RWPE1 (cell line): ENCODE measurements at regions of chr12 and their contacts with region 1.

Region 1: DNA sequence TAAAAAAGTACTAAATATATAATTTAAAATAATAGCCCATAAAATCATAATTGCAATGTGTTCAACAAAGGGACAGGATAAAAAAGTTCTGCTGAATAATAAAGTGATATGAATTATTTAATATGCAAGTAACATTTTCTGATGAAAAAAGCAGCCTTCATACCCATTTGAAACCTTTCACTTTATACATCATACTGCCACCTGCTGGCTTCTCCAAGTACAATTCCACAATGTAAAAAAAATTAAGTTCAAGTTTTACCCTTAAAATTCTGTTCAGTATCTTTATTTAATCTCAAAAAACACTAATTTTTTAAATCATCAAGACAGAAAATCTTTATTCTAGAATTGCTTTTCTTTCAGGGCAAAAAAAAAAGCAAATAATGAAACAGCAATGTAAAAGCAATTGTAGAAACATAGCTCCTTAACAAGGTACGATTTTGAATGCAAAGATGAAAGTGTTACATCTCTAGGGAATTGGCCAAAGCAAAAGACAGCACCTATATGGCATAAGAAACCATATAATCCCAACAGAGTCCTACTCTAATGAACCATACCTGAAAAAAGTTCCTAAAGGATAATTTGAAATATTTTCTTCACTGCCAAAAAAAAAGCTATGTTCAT is 15.0 kb downstream of the MDM1 start:
- DNase-seq: peak; percentile 16
- H3K27ac ChIP-seq: no peak overlapping the region
- CTCF ChIP-seq: peak; percentile 70

Region 2: DNA sequence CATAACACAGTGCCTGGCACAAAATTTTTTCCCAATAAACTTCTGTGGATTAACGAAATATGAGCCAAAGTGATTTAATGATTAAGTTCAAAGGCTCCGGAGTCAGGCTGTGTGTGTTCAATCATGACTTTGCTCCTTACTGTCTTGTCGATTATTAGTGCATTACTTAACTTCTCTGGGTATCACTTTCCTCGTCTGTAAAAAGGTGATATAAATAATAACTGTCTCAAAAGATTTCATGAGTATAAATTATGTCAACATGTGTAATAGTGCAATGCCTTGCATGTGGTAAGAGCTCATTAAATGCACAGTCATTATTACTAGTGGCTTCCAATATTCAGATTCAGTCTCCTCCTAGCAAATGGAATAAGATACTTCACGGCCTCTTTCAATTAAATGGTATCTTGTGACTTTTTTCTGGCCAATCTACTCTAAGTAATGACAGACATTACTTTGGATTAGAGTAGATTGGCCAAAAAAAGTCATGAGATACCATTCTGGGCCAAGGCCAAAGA is 150.8 kb before region 1 on chr12:
- CTCF ChIA-PET with region 1: no interaction called
- POLR2A ChIA-PET with region 1: no interaction called
- DNase-seq: no peak
- H3K27ac ChIP-seq: no peak overlapping the region
- CTCF ChIP-seq: no peak

Region 3: DNA sequence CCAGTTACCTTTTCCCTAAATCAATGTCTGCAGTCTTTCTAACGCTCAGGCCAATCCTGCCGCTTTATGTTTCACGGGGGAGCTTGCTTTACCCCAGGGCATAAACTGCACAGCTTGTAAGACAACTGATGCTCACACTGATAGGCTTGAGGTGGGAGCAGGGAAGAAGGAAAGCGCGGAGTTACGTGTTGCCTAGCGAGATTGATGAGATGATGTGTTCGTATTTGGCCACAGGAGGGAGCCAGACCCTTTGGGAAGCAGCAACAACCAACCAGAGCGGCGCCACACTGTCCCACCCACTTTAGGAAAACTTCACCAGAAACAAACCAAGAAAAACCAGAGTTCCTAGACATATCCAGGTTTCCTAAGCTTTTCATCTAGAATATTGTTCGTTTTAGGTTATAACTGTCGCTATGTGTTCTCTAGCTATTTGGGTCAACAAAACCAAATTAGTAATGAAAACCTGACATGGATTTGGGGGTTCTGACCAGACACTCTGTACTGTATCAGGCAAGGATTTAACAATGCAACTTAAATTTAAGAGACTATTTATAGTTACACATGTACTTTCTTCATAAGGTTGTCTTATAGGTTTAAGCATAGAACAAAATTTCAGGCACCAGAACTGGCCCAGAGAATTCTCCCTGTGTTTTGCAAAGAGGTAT is 93.9 kb before region 1 on chr12:
- CTCF ChIA-PET with region 1: interaction called, 11 read pairs
- POLR2A ChIA-PET with region 1: no interaction called
- DNase-seq: peak; percentile 81
- H3K27ac ChIP-seq: no peak overlapping the region
- CTCF ChIP-seq: peak; percentile 84